CD8-positive, alpha-beta T cell (primary cell): ENCODE measurements at regions of chr2 and their contacts with region 1.

Region 1: DNA sequence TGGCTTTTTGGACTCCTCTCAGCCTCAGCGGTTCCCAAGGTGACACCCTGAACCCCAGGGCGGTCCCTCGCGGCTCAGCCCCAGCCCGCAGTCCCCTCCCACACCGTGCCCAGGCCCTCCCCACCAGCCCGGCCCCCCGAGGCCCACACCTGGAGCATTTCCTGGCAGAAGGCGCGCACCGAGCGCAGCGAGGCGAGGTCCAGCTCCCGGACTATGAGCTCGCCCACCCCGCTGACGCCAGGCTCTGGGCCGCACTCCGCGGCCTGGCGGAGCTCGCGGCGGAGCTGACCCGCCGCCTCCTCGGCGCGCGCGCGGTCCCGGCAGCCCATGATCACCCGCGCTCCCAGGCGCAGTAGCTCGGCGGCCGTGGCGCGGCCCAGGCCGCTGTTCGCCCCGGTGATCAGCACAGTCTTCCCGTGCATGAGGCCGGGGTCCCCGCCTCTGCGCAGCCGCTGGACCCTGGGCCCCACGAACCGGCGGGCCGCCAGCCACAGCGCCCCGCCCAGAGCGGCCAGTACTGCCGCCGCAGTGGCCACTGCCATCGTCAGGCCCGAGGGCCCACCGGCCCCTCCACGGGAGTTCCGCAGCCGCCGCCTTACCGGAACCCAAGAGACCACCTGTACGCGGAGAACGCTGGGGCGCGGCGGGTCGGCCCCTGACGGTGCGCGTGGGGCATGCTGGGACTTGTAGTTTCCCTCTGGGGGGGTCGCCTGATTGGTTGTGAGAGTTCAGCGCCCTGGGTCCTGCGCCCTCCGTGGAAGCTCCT is at the start of gene RDH14:
- DNase-seq: peak; percentile 88 to 96 (median 94)
- ATAC-seq: peak; percentile 87
- H3K4me3 ChIP-seq: peak within 1 kb of the TSS; percentile 55 to 89
- H3K4me3 Mint-ChIP-seq: peak within 1 kb of the TSS; percentile 94
- H3K27ac ChIP-seq: peak within 1 kb of the TSS; percentile 81 to 92
- H3K27ac Mint-ChIP-seq: peak within 1 kb of the TSS; percentile 98
- H3K4me1 ChIP-seq: peaks cover 22% of the 10 kb centered on the region
- H3K4me1 Mint-ChIP-seq: peaks cover 42% of the 10 kb centered on the region
- H3K27me3 ChIP-seq: no peaks in the 10 kb centered on the region
- H3K27me3 Mint-ChIP-seq: no peaks in the 10 kb centered on the region
- CTCF ChIP-seq: no peak
- total RNA-seq, gene RDH14: 12.5 to 13.2 TPM

Region 2: GRCh38 chr2:17753803-17754663 is 806.2 kb before region 1 on chr2 and contains the starts of genes GEN1 and SMC6:
- CTCF ChIA-PET with region 1: no interaction called
- POLR2A ChIA-PET with region 1: interaction called, 6 read pairs
- intact Hi-C with region 1: loop called (anchors 2 kb)
- DNase-seq: peak; percentile 79 to 95 (median 90)
- ATAC-seq: peak; percentile 82
- H3K4me3 ChIP-seq: peak within 1 kb of the TSS; percentile 82 to 87
- H3K4me3 Mint-ChIP-seq: peak within 1 kb of the TSS; percentile 92
- H3K27ac ChIP-seq: peak within 1 kb of the TSS; percentile 95 to 100
- H3K27ac Mint-ChIP-seq: peak within 1 kb of the TSS; percentile 97
- H3K4me1 ChIP-seq: peaks cover 17% of the 10 kb centered on the region
- H3K4me1 Mint-ChIP-seq: peaks cover 27% of the 10 kb centered on the region
- H3K27me3 ChIP-seq: no peaks in the 10 kb centered on the region
- H3K27me3 Mint-ChIP-seq: no peaks in the 10 kb centered on the region
- CTCF ChIP-seq: no peak
- total RNA-seq, gene GEN1: 6.3 to 7.3 TPM
- total RNA-seq, gene SMC6: 5.0 to 6.2 TPM

Region 3: DNA sequence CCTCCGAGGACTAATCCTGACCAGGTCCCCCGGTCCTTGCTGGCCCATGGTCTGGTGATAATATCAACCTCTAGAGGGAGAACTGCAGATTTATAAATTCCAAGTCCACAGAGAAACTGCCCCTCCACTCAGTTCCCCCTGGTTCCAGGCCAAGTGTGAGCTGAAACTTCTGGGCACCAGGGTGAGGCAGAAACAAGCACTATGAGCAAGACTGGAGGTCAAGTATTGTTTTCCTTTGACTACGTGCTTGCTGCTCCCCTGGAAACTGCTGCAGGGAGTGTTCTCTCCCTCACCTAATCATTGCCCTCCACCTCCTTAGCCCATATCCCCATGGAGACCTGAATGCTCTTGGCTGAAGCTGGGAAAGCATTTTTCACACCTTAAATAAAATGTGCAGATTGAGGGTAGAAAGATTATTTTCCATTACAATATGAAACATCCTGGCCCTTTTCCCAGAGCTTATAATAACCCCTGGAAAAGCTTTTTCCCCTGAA is 135.0 kb before region 1 on chr2:
- CTCF ChIA-PET with region 1: no interaction called
- POLR2A ChIA-PET with region 1: no interaction called
- intact Hi-C with region 1: no loop called
- DNase-seq: no peak
- ATAC-seq: no peak
- H3K4me3 ChIP-seq: no peak overlapping the region
- H3K4me3 Mint-ChIP-seq: no peak overlapping the region
- H3K27ac ChIP-seq: no peak overlapping the region
- H3K27ac Mint-ChIP-seq: no peak overlapping the region
- H3K4me1 ChIP-seq: no peaks in the 10 kb centered on the region
- H3K4me1 Mint-ChIP-seq: no peaks in the 10 kb centered on the region
- H3K27me3 ChIP-seq: no peaks in the 10 kb centered on the region
- H3K27me3 Mint-ChIP-seq: peaks cover 7% of the 10 kb centered on the region
- CTCF ChIP-seq: no peak

Region 4: GRCh38 chr2:18792226-18792629 is 232.0 kb after region 1 on chr2:
- CTCF ChIA-PET with region 1: no interaction called
- POLR2A ChIA-PET with region 1: no interaction called
- intact Hi-C with region 1: no loop called
- DNase-seq: no peak
- ATAC-seq: no peak
- H3K4me3 ChIP-seq: no peak overlapping the region
- H3K4me3 Mint-ChIP-seq: no peak overlapping the region
- H3K27ac ChIP-seq: no peak overlapping the region
- H3K27ac Mint-ChIP-seq: no peak overlapping the region
- H3K4me1 ChIP-seq: no peaks in the 10 kb centered on the region
- H3K4me1 Mint-ChIP-seq: no peaks in the 10 kb centered on the region
- H3K27me3 ChIP-seq: no peaks in the 10 kb centered on the region
- H3K27me3 Mint-ChIP-seq: no peaks in the 10 kb centered on the region
- CTCF ChIP-seq: no peak

Region 5: DNA sequence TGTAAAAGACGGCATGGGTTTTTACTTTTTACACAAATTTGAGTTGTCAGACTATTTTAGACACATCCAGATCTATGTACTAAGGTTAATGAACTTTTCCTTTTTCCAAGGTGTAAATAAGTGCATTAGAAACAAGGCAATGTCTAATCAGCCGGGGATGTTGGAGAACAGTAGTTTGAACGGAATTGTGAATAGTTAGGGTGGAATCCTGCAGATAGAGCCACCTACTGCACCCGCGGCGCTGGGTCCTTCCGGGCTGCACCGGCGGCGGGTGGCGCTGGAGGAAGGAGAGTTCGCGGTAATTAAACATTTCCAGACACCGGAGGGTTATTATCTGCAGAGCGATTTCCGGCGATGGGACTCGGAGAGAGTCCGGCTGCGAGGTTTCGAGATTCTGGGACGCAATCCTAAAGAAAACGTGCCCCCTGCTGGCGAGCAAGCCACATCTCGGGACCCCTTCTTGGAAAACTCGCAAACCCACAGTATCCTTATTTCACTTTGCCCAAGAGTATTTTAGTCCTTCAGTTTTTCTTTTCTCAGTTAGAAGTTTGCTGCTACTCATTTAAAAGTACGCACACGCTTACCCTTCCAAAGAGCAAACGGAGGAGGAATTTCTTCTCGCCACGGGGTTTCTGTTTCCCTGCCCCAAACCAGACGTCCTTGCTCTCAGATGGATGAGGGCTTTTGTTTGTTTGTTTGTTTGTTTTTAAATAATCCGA is 802.7 kb after region 1 on chr2:
- CTCF ChIA-PET with region 1: no interaction called
- POLR2A ChIA-PET with region 1: interaction called, 6 read pairs
- intact Hi-C with region 1: loop called (anchors 2 to 5 kb)
- DNase-seq: peak in 6 of 9 experiments; percentile 29 to 74 (median 52)
- ATAC-seq: peak; percentile 48
- H3K4me3 ChIP-seq: peak overlapping the region; percentile 67 to 70
- H3K4me3 Mint-ChIP-seq: peak overlapping the region; percentile 93
- H3K27ac ChIP-seq: no peak overlapping the region
- H3K27ac Mint-ChIP-seq: peak overlapping the region; percentile 68
- H3K4me1 ChIP-seq: peaks cover 36% of the 10 kb centered on the region
- H3K4me1 Mint-ChIP-seq: peaks cover 37% of the 10 kb centered on the region
- H3K27me3 ChIP-seq: peaks cover 28 to 33% of the 10 kb centered on the region in 2 experiments
- H3K27me3 Mint-ChIP-seq: peaks cover 33% of the 10 kb centered on the region
- CTCF ChIP-seq: peak; percentile 38

Region 6: GRCh38 chr2:19901442-19902215 is 1341.4 kb after region 1 on chr2 and contains the start of gene TTC32:
- CTCF ChIA-PET with region 1: no interaction called
- POLR2A ChIA-PET with region 1: interaction called, 8 read pairs
- intact Hi-C with region 1: loop called (anchors 1 to 2 kb)
- DNase-seq: peak; percentile 87 to 96 (median 93)
- ATAC-seq: peak; percentile 86
- H3K4me3 ChIP-seq: peak within 1 kb of the TSS; percentile 83
- H3K4me3 Mint-ChIP-seq: peak within 1 kb of the TSS; percentile 91
- H3K27ac ChIP-seq: peak within 1 kb of the TSS; percentile 89 to 94
- H3K27ac Mint-ChIP-seq: peak within 1 kb of the TSS; percentile 96
- H3K4me1 ChIP-seq: peaks cover 33% of the 10 kb centered on the region
- H3K4me1 Mint-ChIP-seq: peaks cover 30% of the 10 kb centered on the region
- H3K27me3 ChIP-seq: peaks cover 0 to 3% of the 10 kb centered on the region in 2 experiments
- H3K27me3 Mint-ChIP-seq: peaks cover 4% of the 10 kb centered on the region
- CTCF ChIP-seq: no peak
- total RNA-seq, gene TTC32: 33.7 to 35.8 TPM

Region 7: DNA sequence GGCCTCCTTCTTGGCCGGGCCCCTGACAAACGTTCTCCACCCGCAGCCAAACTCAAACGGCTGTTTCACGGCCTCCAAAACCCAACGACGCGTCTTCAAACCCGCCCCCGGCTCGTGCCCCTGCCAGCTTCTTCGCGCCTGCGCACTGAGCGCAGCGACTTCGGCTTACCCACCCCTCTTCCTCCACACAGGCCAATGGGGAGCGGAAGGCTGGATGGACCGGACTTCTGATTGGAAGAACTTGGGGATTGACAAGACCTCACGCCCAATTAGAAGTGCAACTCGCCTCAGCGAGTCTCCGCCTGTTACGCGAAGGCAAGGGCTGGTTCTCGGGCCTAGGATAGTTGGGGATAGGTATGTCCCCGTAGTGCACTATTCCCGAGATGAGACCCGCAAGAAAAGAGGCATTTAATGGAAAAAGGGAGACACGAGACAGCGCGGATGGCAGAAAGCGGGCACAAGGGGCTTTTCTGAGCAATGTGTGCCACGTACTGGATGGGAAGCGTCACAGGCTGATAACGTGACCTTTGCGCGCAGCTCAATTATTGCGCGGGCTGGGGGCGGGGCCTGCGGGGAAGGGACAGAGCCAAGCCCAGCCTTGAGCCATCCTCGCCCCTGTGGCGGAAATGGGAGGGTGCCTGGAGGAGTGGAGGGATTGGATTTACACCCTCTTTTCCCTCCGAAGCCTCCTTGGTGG is 1491.5 kb after region 1 on chr2 and contains the start of gene LAPTM4A:
- CTCF ChIA-PET with region 1: no interaction called
- POLR2A ChIA-PET with region 1: interaction called, 7 read pairs
- intact Hi-C with region 1: loop called in 1 of 2 experiments (anchors 2 kb)
- DNase-seq: peak; percentile 95 to 100 (median 97)
- ATAC-seq: peak; percentile 88
- H3K4me3 ChIP-seq: peak within 1 kb of the TSS; percentile 82 to 90
- H3K4me3 Mint-ChIP-seq: no peak within 1 kb of the TSS
- H3K27ac ChIP-seq: peak within 1 kb of the TSS; percentile 99
- H3K27ac Mint-ChIP-seq: no peak within 1 kb of the TSS
- H3K4me1 ChIP-seq: peaks cover 28% of the 10 kb centered on the region
- H3K4me1 Mint-ChIP-seq: peaks cover 31% of the 10 kb centered on the region
- H3K27me3 ChIP-seq: no peaks in the 10 kb centered on the region
- H3K27me3 Mint-ChIP-seq: peaks cover 19% of the 10 kb centered on the region
- CTCF ChIP-seq: no peak
- total RNA-seq, gene LAPTM4A: 92.4 to 98.8 TPM